ENCODE measurements at regions of chr1 and their contacts with region 1.

Region 1: DNA sequence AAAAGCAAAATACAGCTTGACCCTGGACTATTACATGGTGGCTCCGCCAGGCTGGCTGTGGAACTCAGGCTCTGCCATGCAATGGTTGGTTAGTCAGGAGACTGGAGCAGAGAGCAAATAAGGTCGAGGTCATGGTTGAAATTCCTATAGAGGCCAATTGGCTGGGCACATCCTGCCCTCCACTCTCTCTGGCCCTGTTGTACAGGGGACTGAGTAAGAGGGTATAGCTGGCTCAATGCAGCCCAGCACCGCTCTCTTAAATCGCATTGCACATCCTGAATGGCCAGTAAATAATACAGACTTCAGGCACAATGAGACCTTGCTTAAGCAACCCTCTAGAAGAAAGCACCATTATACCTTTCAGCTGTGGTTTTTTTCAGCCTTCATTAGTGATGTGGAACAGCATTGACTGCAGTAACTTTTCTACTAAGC is 59.3 kb upstream of the PPP2R5A start:
- DNase-seq: no peak
- ATAC-seq: peak in 1 of 2 donors; percentile 51

Region 2: GRCh38 chr1:212179394-212180076 is 46.4 kb before region 1 on chr1:
- intact Hi-C with region 1: loop called in 1 of 2 experiments (anchors 2 kb)
- DNase-seq: no peak
- ATAC-seq: peak in 1 of 2 donors; percentile 56